ENCODE measurements at regions of chr7 and their contacts with region 1.

Region 1: DNA sequence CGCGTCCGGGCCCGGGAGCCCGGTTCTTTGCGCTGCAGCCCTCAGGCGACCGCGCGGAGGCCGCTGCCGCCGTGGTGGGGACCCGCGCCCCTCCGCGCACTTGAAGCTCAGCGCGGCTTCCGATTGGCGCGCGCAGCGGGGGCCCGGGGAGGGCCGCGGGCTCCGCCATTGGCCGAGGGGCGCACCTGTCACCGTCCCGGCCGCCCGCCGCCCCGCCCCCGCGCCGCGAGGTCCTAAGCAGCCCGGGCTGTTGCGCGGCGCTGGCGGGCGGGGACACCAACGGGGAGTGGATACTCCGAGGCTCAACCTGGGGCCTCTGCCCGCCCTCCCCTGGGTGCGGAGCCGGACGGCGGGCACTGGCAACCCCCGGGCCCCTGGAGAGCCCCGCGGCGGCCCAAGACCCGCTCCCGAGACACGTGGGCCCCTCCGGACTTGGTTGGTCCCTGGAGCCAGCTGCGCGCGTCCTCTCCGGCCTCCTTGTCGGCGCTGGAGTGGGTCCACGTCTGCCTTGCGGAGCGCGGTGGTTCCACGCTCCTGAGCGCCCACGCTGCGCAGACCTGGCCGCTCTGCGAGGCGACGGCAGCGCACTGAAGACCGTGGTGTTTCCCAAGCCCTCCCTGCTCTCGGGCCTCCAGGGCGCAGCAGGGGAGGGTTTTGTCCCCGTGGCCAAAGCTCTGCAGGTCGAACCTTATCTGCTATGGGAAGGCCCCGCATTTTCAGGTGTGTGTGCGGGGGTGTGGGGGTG is at the start of gene MNX1:
- DNase-seq: peak; percentile 99

Region 2: GRCh38 chr7:156865493-156865892 is 145.3 kb before region 1 on chr7:
- CTCF ChIA-PET with region 1: no interaction called
- POLR2A ChIA-PET with region 1: no interaction called
- DNase-seq: no peak

Region 3: DNA sequence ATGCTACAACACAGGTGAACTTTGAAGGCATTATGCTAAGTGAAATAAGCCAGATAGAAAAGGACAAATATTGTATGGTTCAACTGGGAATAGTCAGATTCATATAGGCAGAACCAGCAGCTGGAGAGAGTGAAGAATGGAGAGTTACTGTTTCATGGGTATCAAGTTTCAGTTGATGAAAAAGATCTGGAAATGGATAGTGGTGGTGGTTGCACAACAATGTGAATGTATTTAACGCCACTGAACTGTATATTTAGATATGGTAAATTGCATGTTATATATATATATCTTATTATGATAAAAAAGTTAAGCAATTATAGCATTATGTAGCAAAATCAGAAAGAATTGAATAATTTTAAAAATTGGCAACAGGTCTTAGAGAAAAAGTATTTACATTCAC is 121.7 kb before region 1 on chr7:
- CTCF ChIA-PET with region 1: no interaction called
- POLR2A ChIA-PET with region 1: no interaction called
- DNase-seq: no peak

Region 4: DNA sequence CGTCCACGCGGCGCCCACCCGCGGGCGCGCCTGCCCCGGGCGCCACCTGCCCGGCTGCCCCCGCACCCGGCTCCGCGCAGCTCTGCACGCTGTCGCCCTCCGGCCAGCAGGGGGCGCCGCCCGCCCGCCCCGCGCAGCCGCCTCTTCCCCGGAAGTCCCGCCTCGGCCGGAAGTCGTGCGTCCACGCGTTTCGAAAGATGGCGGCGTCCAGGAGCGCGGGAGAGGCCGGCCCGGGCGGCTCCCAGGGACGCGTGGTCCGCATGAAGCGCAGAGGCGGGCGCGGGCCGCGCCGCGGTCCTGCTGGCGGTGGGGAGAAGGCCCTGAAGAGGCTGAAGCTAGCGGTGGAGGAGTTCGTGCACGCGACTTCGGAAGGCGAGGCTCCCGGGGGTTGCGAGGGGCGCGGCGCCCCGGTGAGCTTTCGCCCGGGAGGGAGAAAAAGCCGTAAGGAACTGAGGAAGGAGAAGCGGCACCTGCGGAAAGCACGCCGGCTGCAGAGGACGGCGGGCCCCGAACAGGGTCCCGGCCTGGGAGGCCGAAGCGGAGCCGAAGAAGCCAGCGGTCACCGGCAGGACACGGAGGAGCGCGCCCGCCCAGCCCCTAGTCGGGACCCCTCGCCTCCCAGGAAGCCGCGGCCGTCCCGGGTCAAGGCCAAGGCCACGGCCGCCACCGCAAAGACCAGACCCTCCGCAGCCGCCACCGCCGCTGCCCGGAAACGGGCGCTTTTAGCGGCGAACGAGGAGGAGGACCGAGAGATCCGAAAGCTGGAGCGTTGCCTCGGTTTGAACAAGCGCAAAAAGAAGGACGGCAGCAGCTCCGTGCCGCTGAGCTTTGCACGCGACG is 61.0 kb before region 1 on chr7 and contains the start of gene NOM1:
- CTCF ChIA-PET with region 1: no interaction called
- POLR2A ChIA-PET with region 1: interaction called, 17 read pairs
- DNase-seq: peak; percentile 99

Region 5: DNA sequence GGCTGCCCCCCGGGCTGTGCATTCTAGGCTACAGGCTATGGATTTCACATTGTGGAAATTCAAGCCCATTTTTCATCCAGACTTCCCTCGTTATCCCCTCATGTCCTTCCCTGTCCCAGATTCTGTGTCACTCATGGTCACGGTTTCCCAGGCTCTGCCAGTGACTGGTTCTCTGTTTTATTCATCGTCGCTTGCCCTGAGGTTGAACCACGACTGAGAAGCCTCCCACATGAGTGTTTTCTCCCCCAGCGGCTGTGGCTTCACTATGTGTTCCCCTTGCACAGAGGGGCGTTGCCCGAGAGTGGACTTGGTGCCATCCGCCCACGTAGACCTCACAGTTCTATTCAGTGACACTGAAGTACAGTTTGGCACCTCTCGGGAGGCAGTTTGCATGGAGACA is 47.3 kb before region 1 on chr7:
- CTCF ChIA-PET with region 1: no interaction called
- POLR2A ChIA-PET with region 1: no interaction called
- DNase-seq: no peak

Region 6: DNA sequence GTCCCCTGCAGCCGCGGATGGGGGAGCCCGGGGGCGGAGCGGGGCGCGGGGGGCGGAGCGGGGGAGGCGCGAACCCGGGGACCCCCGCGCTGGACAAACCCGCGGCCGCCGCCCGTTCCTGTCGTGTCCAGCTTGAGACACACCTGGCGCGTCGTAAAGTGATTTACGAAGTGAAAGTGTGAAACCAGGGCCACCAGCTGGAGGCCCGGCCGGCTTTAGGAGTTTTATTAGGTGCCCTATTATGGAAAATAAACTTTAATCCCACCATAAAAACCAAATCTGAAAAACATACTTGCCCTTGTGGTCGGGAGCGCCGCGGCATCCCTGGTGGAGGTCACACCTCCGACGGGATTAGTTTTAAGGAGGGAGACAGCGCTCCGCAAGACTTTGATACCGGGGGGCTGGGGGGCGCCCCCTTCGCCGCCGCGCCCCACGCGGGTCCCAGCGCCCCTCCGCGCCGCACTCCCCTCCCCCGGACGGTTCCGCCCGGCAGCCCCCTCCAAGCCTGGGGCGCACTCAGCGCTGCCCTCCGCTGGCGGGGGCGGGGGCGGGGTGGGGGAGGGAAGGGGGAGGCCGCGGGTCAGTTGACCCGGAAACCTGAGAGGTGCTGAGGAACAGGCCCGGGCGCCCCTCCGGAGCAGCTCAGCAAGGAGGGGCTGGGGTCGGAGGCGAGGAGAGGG is 10.6 kb before region 1 on chr7:
- CTCF ChIA-PET with region 1: interaction called, 3 read pairs
- POLR2A ChIA-PET with region 1: interaction called, 15 read pairs
- DNase-seq: no peak

Region 7: GRCh38 chr7:157022681-157023588 is 12.2 kb after region 1 on chr7:
- CTCF ChIA-PET with region 1: interaction called, 3 read pairs
- POLR2A ChIA-PET with region 1: interaction called, 15 read pairs
- DNase-seq: no peak

Region 8: GRCh38 chr7:157043745-157044144 is 33.0 kb after region 1 on chr7:
- CTCF ChIA-PET with region 1: no interaction called
- POLR2A ChIA-PET with region 1: interaction called, 44 read pairs
- DNase-seq: peak; percentile 64

Measured in HEK293T (cell line).